ENCODE measurements at regions of chr10 and their contacts with region 1.

Region 1: DNA sequence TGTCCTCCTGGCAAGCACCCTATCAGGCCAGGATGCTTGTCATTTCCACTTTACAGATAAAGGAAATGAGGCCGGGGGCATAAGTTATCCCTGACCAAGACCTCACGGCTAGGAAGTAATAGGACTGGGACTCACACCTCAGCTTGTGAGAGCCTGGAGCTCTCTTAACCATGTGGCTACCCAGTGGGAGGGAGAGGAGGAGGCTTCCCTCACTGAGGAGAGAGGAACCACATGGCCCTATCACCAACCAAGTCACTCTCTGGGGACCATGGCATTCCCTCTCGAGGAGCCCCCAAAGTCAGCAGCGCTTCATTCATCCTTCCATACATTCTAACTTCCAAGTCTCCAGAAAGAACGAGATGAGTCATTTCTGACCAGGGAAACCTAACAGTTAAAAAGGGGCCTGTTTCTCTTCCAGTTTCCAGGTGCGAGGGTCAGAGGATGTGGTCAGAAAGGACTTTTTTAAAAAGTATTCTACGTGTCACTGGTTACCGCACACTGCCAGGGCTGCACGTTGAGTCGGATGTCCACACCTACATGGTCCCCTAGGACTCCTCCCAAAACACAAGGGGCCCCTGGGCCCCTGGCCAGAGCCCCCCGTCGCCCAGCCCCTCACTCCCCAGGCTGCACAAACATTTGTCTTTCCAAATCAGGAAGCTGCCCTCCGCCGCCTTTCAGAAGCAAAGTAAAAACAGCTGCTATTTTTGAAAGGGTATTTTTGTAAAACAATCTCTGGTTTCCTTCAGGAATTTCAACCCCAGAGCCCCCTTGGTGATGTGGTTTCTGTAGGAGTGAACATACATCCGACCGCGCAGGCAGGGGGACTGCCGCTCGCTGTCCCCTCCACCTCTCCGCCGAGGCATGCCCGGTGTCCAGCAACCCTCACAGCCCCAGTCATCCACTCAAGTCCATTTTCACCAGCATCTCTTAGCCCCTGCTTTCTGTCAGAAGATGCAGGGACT is 128.2 kb upstream of the CHST15 start:
- DNase-seq: peak in 1 of 2 donors; percentile 57
- ATAC-seq: peak; percentile 5
- H3K4me3 ChIP-seq: no peak overlapping the region
- H3K27ac ChIP-seq: peak overlapping the region in 1 of 2 donors; percentile 10
- H3K4me1 ChIP-seq: peaks cover 0 to 9% of the 10 kb centered on the region in 2 donors
- H3K27me3 ChIP-seq: no peaks in the 10 kb centered on the region

Region 2: DNA sequence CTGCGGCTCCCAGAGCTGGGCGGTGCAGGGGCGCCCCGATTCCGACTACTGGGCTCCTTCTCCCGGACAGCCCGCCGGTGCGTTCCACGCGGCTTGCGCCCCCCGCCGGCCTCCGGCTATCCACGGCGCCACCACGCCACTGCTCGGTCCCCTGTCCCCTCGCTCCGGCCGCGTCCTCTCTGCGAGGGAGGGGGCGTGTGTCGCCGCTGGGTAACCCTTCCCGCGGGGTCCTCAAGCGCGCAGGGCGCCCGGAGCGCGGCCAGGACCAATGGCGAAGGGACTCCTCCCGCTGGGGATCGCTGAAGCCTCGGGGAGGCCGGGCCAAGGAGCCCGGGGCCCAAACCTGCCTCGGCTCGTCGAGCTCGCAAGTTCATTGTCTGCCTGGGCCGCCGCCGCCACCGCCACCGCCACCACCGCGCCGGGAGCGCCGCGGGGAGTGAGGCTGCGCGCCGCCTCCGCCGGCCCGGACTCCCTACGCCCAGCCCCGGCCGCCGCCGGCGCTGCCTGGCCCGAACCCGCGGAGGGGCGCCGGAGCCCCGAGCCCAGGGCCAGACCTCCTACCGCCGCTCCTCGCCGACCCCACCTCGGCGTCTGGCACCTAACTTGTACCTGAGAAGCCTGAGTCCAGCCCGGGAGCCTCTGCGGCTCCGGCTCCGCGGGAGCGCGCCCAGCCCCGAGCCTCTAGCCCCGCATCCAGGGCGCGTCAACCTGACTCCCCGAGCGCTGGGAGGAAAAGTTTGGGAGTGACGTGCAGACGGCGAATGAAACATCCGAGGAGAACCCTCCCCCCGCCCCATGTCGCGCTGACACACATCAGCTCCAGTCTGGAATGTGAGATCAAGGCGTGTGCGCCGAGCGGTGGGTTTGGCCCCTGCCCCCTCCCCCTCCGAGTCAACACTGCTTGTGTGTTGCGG is 128.5 kb before region 1 on chr10 and contains the start of gene CHST15:
- intact Hi-C with region 1: loop called in 1 of 2 experiments (anchors 10 kb)
- DNase-seq: peak; percentile 68 to 87
- ATAC-seq: peak; percentile 39
- H3K4me3 ChIP-seq: peak within 1 kb of the TSS; percentile 62 to 81
- H3K27ac ChIP-seq: peak within 1 kb of the TSS in 1 of 2 donors; percentile 85
- H3K4me1 ChIP-seq: no peaks in the 10 kb centered on the region
- H3K27me3 ChIP-seq: no peaks in the 10 kb centered on the region
- total RNA-seq, gene CHST15: 39.9 to 43.8 TPM

Region 3: DNA sequence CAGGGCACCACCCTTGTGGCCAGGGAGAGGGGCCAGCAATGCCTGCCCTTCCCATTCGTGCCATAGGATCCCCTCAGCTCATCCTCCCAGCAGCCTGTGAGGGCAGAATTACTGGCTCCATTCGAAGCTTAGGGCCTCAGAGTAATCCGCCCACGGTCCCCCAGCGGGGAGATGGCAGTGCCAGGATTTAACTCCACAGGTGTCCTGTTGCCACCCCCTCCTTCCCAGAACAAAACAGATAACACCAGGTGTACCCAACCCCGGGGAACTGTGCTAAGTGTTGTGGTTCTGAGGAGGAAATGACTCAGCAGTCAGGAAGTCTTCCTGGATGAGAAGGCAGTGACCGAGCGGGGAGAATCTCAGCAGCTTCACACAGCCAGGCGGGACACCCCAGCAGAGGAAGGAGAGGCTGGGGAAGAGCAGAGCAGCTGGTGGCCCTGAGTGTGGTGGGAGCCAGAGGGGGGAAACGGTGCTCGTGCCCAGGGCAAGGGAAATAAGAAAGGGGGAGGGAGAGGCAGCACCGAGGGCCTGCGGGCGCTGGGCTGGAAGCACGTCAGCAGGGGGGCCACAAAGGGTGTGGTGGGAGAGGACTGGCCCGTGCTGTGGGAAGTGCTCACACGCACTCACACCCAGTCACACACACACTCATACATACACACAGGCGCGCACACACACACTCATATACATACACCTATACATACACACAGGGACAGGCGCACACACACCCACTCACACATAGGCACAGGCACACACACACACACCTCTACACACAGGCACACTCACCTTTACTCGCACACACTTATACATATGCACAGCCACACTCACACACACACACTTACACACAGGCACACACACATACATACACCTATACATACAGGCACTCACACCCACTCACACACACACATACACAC is 68.5 kb before region 1 on chr10:
- intact Hi-C with region 1: loop called in 1 of 2 experiments (anchors 5 kb)
- DNase-seq: peak in 1 of 2 donors; percentile 70
- ATAC-seq: peak; percentile 53
- H3K4me3 ChIP-seq: no peak overlapping the region
- H3K27ac ChIP-seq: peak overlapping the region in 1 of 2 donors; percentile 49
- H3K4me1 ChIP-seq: peaks cover 0 to 7% of the 10 kb centered on the region in 2 donors
- H3K27me3 ChIP-seq: no peaks in the 10 kb centered on the region

Region 4: DNA sequence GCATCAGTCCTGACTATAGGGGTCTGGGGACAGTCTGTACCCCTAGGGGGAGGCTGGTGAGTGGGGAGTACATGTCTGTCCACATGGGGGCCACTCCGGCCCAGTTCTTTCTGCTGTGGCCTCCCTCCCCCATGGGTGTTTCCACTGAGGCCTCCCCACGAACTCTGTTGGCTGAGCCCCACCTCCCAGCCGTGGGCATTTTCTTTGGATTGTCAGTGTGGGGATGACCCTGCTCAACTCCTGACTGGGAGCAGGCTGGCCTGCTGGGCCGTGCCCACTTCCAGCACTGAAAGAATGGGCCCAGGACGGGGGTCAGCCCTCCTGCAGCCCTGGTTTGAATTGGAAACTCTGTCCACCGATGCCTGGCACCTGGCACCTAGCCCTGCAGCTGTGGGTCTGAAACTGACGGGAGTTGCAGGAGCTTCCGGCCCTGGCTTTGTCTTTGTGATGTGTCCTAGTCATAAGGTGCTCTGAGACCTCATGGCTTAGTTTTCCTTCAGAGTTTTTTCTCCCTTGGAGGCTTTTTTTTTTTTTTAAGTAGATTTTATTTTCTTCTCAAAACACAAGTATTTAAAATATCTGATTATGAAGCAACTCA is 286.5 kb after region 1 on chr10:
- intact Hi-C with region 1: no loop called
- DNase-seq: peak in 1 of 2 donors; percentile 27
- ATAC-seq: peak; percentile 7
- H3K4me3 ChIP-seq: no peak overlapping the region
- H3K27ac ChIP-seq: no peak overlapping the region
- H3K4me1 ChIP-seq: no peaks in the 10 kb centered on the region
- H3K27me3 ChIP-seq: no peaks in the 10 kb centered on the region